Ascending aorta (tissue), 2 donors: ENCODE measurements at regions of chr14 and their contacts with region 1.

Region 1: GRCh38 chr14:31449971-31450610 is 7.2 kb downstream of the DTD2 start:
- DNase-seq: no peak
- H3K4me3 ChIP-seq: no peak overlapping the region
- H3K27ac ChIP-seq: peak overlapping the region in 1 of 2 donors; percentile 16
- H3K4me1 ChIP-seq: peaks cover 0 to 1% of the 10 kb centered on the region in 2 donors
- H3K27me3 ChIP-seq: no peaks in the 10 kb centered on the region
- CTCF ChIP-seq: peak; percentile 24 to 62 (median 39)

Region 2: DNA sequence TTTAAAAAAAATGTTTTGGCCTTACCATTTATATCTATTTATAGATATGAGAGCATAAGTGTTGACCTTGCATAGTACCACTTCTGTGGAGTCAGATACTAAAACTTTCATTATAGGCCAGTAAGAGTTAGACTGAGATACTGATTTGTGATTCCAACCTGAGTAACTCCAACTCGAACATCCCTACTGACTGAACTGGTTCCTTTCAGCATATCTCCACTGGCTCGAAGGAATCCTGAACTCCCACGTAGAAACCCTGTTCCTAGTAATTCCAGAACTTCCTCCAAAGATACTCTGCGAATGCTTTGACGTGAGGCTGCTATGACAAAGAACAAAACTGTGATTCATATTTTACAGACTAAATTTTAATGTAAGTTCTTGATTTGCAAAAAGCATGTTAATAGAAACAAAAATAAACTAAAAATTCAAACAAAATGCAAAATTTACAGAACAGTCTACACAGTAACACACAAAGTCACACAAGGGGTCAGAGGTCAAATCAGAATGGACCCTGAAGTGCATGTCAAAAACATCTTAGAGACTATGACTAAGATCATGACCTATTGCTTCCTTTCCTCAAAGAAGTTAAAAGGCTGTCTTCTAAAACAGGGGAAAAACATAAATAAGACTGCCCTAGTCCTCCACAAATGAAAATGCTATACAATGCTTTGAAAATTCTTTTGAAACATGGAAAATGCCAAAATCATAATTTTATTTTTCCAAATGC is 61.2 kb before region 1 on chr14:
- intact Hi-C with region 1: loop called (anchors 10 kb)
- DNase-seq: no peak
- H3K4me3 ChIP-seq: no peak overlapping the region
- H3K27ac ChIP-seq: no peak overlapping the region
- H3K4me1 ChIP-seq: no peaks in the 10 kb centered on the region
- H3K27me3 ChIP-seq: no peaks in the 10 kb centered on the region
- CTCF ChIP-seq: no peak